Right ventricle myocardium inferior (tissue), 1 donor: ENCODE measurements at regions of chr3 and their contacts with region 1.

Region 1: GRCh38 chr3:172476347-172476746 is 28.1 kb upstream of the GHSR start:
- DNase-seq: peak; percentile 42
- ATAC-seq: no peak

Region 2: GRCh38 chr3:172332256-172333041 is 143.9 kb before region 1 on chr3:
- intact Hi-C with region 1: loop called (anchors 10 kb)
- DNase-seq: no peak
- ATAC-seq: peak; percentile 84

Region 3: GRCh38 chr3:172367205-172368105 is 108.9 kb before region 1 on chr3:
- intact Hi-C with region 1: loop called (anchors 10 kb)
- DNase-seq: no peak
- ATAC-seq: no peak

Region 4: GRCh38 chr3:172595641-172596393 is 119.5 kb after region 1 on chr3:
- intact Hi-C with region 1: no loop called
- DNase-seq: no peak
- ATAC-seq: peak; percentile 73